Activated CD4-positive, alpha-beta T cell treated with anti-CD3 and anti-CD28 coated beads for 36 hours (primary cell): ENCODE measurements at regions of chr15 and their contacts with region 1.

Region 1: GRCh38 chr15:78550194-78550593 is 9.9 kb downstream of the PSMA4 start:
- DNase-seq: no peak
- ATAC-seq: no peak
- H3K4me3 Mint-ChIP-seq: no peak overlapping the region
- H3K27ac Mint-ChIP-seq: no peak overlapping the region
- H3K4me1 Mint-ChIP-seq: no peaks in the 10 kb centered on the region
- H3K27me3 Mint-ChIP-seq: no peaks in the 10 kb centered on the region

Region 2: GRCh38 chr15:78527325-78527724 is 22.9 kb before region 1 on chr15:
- CTCF ChIA-PET with region 1: no interaction called
- POLR2A ChIA-PET with region 1: interaction called, 11 read pairs
- intact Hi-C with region 1: no loop called
- DNase-seq: no peak
- ATAC-seq: no peak
- H3K4me3 Mint-ChIP-seq: no peak overlapping the region
- H3K27ac Mint-ChIP-seq: no peak overlapping the region
- H3K4me1 Mint-ChIP-seq: no peaks in the 10 kb centered on the region
- H3K27me3 Mint-ChIP-seq: no peaks in the 10 kb centered on the region

Region 3: GRCh38 chr15:78889000-78889399 is 338.8 kb after region 1 on chr15:
- CTCF ChIA-PET with region 1: no interaction called
- POLR2A ChIA-PET with region 1: no interaction called
- intact Hi-C with region 1: no loop called
- DNase-seq: no peak
- ATAC-seq: no peak
- H3K4me3 Mint-ChIP-seq: no peak overlapping the region
- H3K27ac Mint-ChIP-seq: no peak overlapping the region
- H3K4me1 Mint-ChIP-seq: peaks cover 33% of the 10 kb centered on the region
- H3K27me3 Mint-ChIP-seq: no peaks in the 10 kb centered on the region